ENCODE measurements at regions of chr18 and their contacts with region 1.

Region 1: GRCh38 chr18:63016270-63016669 is 300.9 kb downstream of the PHLPP1 start:
- DNase-seq: peak; percentile 67
- ATAC-seq: peak; percentile 64; the same call in 1 of the 2 replicates
- H3K4me3 ChIP-seq: no peak overlapping the region
- H3K27ac ChIP-seq: no peak overlapping the region
- H3K4me1 ChIP-seq: no peaks in the 10 kb centered on the region
- H3K27me3 ChIP-seq: peaks cover 74% of the 10 kb centered on the region
- CTCF ChIP-seq: peak; percentile 80

Region 2: GRCh38 chr18:63074981-63075404 is 58.7 kb after region 1 on chr18:
- CTCF ChIA-PET with region 1: no interaction called
- POLR2A ChIA-PET with region 1: no interaction called
- intact Hi-C with region 1: loop called (anchors 5 kb)
- DNase-seq: peak; percentile 70
- ATAC-seq: peak; percentile 86
- H3K4me3 ChIP-seq: peak overlapping the region; percentile 84
- H3K27ac ChIP-seq: peak overlapping the region; percentile 81
- H3K4me1 ChIP-seq: peaks cover 12% of the 10 kb centered on the region
- H3K27me3 ChIP-seq: peaks cover 10% of the 10 kb centered on the region; the same call in 1 of the 2 replicates
- CTCF ChIP-seq: no peak

Region 3: DNA sequence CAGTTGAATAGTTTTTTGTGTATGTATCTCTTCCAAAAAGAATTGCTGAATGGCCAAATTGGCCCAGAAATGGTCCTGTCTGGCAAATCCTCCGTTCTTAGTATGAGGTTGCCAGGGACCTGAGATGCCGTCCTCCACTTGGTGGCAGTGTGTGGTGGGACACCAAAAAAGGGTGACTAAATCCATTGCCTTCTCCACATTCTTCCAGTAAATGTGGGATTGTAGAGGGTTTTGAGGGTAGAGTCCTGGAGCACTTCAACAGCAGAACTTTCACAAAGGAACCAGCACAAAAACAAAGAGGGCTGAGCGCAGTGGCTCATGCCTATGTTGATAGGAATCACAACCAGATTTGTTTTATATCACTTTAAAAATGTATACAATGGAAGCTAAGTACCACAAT is 103.4 kb after region 1 on chr18:
- CTCF ChIA-PET with region 1: interaction called, 8 read pairs
- POLR2A ChIA-PET with region 1: no interaction called
- intact Hi-C with region 1: loop called (anchors 2 kb)
- DNase-seq: peak; percentile 39
- ATAC-seq: peak; percentile 74
- H3K4me3 ChIP-seq: no peak overlapping the region
- H3K27ac ChIP-seq: no peak overlapping the region
- H3K4me1 ChIP-seq: no peaks in the 10 kb centered on the region
- H3K27me3 ChIP-seq: peaks cover 41% of the 10 kb centered on the region
- CTCF ChIP-seq: peak; percentile 64

Region 4: GRCh38 chr18:63505566-63506335 is 489.5 kb after region 1 on chr18:
- CTCF ChIA-PET with region 1: interaction called, 4 read pairs
- POLR2A ChIA-PET with region 1: no interaction called
- intact Hi-C with region 1: loop called (anchors 5 kb)
- DNase-seq: peak; percentile 75
- ATAC-seq: peak; percentile 81
- H3K4me3 ChIP-seq: no peak overlapping the region
- H3K27ac ChIP-seq: no peak overlapping the region
- H3K4me1 ChIP-seq: no peaks in the 10 kb centered on the region
- H3K27me3 ChIP-seq: no peaks in the 10 kb centered on the region
- CTCF ChIP-seq: peak; percentile 89

Measured in PC-3 (cell line).